Cardiac septum (tissue), 1 donor: ENCODE measurements at regions of chr7 and their contacts with region 1.

Region 1: DNA sequence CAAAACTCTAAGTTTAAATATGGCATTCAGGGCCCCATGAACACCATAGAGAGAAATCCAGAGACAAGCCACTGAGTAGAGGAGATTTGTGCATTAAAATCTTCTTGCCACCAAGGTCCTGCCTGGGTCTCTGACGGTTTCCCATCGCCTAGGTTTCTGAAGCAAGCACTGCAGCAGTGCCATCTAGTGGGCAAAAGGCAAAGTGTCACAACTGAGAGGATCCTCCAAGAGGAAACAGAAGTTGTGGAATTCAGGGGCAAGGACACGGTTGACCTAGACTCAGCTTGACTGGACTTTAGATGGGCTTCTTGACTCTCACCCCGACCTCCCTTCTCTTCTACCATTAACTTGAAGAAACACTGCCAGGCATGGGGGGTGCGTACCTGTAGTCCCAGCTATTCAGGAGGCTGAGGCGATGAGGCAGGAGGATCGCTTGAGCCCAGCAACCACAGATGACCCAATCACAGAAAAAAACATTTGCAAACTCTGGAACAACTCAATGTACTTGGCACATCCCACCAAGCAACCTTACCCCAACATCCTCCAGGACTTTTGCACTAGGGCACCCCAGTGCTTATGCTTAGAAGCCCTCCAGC is 604.1 kb downstream of the GALNT17 start:
- DNase-seq: no peak

Region 2: DNA sequence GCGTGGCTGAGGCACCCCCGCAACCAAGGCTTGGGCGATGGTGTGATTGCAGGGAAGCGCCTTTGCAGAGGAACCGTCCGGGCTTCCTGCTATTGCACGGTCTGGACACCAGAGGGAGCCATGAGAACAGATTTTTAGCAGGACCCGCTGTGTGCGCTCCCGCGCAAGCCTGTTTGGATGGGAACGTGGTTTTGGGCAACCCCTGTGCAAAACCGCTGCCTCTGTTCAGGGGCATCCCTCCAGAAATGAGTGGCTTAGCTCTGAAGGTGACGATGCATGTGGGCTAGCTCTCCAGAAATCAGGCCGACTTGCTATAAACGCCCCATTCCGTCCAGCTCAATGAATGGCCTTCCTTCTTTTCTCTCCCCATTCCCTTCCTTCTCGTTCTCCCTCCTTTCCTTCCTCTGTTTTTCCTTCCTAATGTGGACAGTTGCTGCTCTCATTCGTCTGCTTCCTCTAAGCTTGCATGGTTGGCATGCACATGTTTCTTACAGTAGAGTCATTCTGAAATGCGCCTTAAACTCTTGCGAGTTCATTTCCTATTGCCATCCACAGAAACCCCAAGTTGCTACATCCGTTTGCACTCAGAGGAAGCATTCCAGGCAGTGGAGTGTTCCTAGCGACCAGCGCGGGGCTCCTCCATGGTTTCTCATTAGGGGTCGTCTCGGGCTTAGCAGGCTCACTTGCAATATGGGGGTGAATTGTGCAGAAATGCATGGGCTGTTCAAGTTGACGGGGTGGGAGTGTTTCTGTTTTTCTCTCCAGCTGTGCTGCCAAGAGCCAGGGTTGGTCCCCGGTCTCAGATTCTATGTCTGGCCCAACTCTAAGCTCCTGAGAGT is 906.6 kb before region 1 on chr7:
- intact Hi-C with region 1: loop called (anchors 2 kb)
- DNase-seq: peak; percentile 82

Region 3: DNA sequence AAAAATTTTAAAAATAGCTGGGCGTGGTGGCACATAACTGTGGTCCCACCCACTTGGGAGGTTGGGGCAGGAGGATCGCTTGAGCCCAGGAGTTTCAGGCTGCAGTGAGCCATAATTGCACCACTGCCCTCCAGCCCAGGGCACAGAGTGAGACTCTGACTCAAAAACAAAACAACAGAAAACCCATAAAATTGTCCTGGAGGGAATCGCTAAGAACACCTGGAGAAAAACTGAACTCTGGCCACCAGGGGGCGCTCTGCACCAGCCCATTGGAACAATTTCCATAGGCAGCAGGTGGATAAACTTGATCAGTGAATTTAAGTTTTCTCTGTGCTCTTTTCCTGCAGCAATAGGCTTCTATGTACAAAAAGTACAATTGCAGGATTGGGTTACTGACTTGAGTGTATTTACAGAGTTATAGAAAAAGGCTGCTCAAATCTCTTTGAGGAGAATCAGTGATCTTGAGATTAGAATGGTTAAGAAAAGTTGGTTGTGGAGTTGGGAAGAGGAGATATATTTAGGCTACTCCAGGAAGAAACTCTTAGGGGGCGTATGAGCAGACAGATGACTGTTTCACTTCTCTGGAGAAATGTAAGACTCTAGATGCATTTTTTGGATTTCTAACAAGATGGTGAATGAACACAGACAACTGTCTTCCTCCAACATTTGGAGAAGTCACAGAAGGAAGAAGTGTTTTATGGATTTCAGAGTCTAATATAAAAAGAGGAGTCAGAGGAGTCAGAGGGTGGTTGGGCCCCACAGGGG is 879.0 kb before region 1 on chr7:
- intact Hi-C with region 1: loop called (anchors 2 kb)
- DNase-seq: no peak